OCI-LY7 (cell line): ENCODE measurements at regions of chr17 and their contacts with region 1.

Region 1: DNA sequence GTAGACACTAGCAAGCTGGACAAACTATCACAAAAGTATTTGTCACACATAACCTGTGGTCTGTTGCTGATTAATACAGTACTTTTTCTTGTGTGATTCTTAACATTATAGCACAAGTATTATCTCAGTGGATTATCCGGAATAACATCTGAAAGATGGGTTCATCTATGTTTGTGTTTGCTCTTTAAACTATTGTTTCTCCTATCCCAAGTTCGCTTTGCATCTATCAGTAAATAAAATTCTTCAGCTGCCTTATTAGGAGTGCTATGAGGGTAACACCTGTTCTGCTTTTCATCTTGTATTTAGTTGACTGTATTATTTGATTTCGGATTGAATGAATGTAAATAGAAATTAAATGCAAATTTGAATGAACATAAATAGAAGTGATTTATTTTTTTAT is 14.5 kb downstream of the RNFT1 start:
- DNase-seq: no peak
- H3K4me3 ChIP-seq: no peak overlapping the region
- H3K27ac ChIP-seq: no peak overlapping the region
- H3K4me1 ChIP-seq: peaks cover 64% of the 10 kb centered on the region
- CTCF ChIP-seq: no peak

Region 2: GRCh38 chr17:59964482-59965328 is 14.7 kb after region 1 on chr17 and contains the start of gene RNFT1:
- CTCF ChIA-PET with region 1: no interaction called
- POLR2A ChIA-PET with region 1: interaction called, 12 read pairs
- intact Hi-C with region 1: no loop called
- DNase-seq: peak; percentile 92
- H3K4me3 ChIP-seq: peak within 1 kb of the TSS; percentile 78
- H3K27ac ChIP-seq: peak within 1 kb of the TSS; percentile 62
- H3K4me1 ChIP-seq: peaks cover 20% of the 10 kb centered on the region
- CTCF ChIP-seq: no peak
- total RNA-seq, gene RNFT1: 17.2 and 21.5 TPM in 2 replicates